Esophagus muscularis mucosa (tissue), 4 donors: ENCODE measurements at regions of chr1 and their contacts with region 1.

Region 1: DNA sequence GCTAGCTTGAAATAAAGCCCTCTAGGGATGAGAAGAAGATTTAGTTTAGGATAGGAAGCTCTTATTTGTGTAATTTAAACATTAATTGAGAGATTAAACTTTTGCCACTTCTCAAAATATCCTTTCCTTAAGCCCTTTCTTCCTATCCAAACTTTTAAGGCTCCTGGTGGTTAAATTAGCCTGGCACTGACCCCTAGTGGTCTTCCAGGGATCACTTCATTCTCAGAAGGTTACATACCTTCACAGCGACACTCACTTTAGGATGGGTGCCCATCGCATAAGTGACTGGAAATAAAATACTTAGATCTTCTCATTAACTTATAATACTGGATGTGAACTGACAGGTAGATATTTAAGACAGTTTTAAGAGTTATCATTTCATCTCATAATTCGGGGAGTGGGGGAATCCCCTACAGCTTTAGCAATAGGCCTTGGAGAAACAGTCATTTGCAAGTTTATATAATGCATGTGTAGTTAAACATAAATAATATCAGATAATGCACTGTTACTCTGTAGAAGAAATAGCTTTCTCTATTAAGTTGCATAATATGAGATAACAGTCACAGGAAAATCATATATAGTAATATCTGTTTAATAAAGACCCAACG is 7.4 kb downstream of the LHX9 start:
- DNase-seq: no peak
- H3K4me3 ChIP-seq: no peak overlapping the region
- H3K27ac ChIP-seq: no peak overlapping the region
- H3K4me1 ChIP-seq: peaks cover 4 to 17% (median 12%) of the 10 kb centered on the region in 4 donors
- H3K27me3 ChIP-seq: peaks cover 0 to 83% (median 35%) of the 10 kb centered on the region in 4 donors
- CTCF ChIP-seq: peak; percentile 51 to 69 (median 61)
- EP300 ChIP-seq: no peak
- POLR2A ChIP-seq: no peak

Region 2: GRCh38 chr1:197526736-197527371 is 397.8 kb before region 1 on chr1:
- intact Hi-C with region 1: loop called (anchors 5 kb)
- DNase-seq: no peak
- H3K4me3 ChIP-seq: no peak overlapping the region
- H3K27ac ChIP-seq: no peak overlapping the region
- H3K4me1 ChIP-seq: no peaks in the 10 kb centered on the region
- H3K27me3 ChIP-seq: no peaks in the 10 kb centered on the region
- CTCF ChIP-seq: peak; percentile 54 to 72 (median 69)
- EP300 ChIP-seq: no peak
- POLR2A ChIP-seq: no peak

Region 3: GRCh38 chr1:197614916-197615692 is 309.5 kb before region 1 on chr1:
- intact Hi-C with region 1: loop called (anchors 5 kb)
- DNase-seq: no peak
- H3K4me3 ChIP-seq: no peak overlapping the region
- H3K27ac ChIP-seq: no peak overlapping the region
- H3K4me1 ChIP-seq: peaks cover 0 to 5% (median 0%) of the 10 kb centered on the region in 4 donors
- H3K27me3 ChIP-seq: no peaks in the 10 kb centered on the region
- CTCF ChIP-seq: peak; percentile 42 to 56 (median 43)
- EP300 ChIP-seq: no peak
- POLR2A ChIP-seq: no peak

Region 4: GRCh38 chr1:197958438-197959300 is 34.0 kb after region 1 on chr1:
- intact Hi-C with region 1: no loop called
- DNase-seq: no peak
- H3K4me3 ChIP-seq: no peak overlapping the region
- H3K27ac ChIP-seq: no peak overlapping the region
- H3K4me1 ChIP-seq: peaks cover 0 to 5% (median 0%) of the 10 kb centered on the region in 4 donors
- H3K27me3 ChIP-seq: no peaks in the 10 kb centered on the region
- CTCF ChIP-seq: no peak
- EP300 ChIP-seq: no peak
- POLR2A ChIP-seq: no peak

Region 5: DNA sequence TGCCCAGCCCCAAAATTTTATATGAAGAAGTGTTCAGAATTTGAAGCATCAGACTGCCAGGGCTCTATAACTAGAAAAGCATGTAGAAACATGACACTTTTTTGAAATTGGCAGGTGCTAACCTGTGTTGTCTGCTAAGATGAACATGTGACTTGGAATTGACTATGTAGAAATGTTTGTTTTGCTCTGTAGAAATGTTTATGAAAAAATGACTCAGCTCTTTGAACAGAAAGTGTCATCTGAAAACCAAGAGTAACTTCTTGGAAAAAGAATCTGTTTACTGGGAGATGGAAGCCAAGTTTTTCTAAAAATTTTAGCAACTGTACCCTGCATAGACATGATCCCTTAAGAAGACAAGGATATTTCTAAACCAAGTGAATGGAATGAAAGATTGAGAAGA is 51.7 kb after region 1 on chr1:
- intact Hi-C with region 1: no loop called
- DNase-seq: no peak
- H3K4me3 ChIP-seq: no peak overlapping the region
- H3K27ac ChIP-seq: no peak overlapping the region
- H3K4me1 ChIP-seq: no peaks in the 10 kb centered on the region
- H3K27me3 ChIP-seq: peaks cover 0 to 6% (median 0%) of the 10 kb centered on the region in 4 donors
- CTCF ChIP-seq: no peak
- EP300 ChIP-seq: no peak
- POLR2A ChIP-seq: no peak

Region 6: GRCh38 chr1:198047913-198048312 is 123.3 kb after region 1 on chr1:
- intact Hi-C with region 1: no loop called
- DNase-seq: no peak
- H3K4me3 ChIP-seq: no peak overlapping the region
- H3K27ac ChIP-seq: no peak overlapping the region
- H3K4me1 ChIP-seq: no peaks in the 10 kb centered on the region
- H3K27me3 ChIP-seq: no peaks in the 10 kb centered on the region
- CTCF ChIP-seq: no peak
- EP300 ChIP-seq: no peak
- POLR2A ChIP-seq: no peak